Activated B cell treated with CpG ODN at 0.5 μM for 24 hours (primary cell): ENCODE measurements at regions of chr15 and their contacts with region 1.

Region 1: GRCh38 chr15:85330901-85331588 is 49.4 kb upstream of the AKAP13 start:
- DNase-seq: peak; percentile 56
- ATAC-seq: peak; percentile 53
- H3K4me3 Mint-ChIP-seq: peak overlapping the region; percentile 90
- H3K27ac Mint-ChIP-seq: peak overlapping the region; percentile 99
- H3K4me1 Mint-ChIP-seq: peaks cover 74% of the 10 kb centered on the region
- H3K27me3 Mint-ChIP-seq: no peaks in the 10 kb centered on the region
- CTCF ChIP-seq: no peak

Region 2: GRCh38 chr15:85312486-85312885 is 18.6 kb before region 1 on chr15:
- CTCF ChIA-PET with region 1: interaction called, 78 read pairs
- POLR2A ChIA-PET with region 1: interaction called, 409 read pairs
- intact Hi-C with region 1: loop called (anchors 1 kb)
- DNase-seq: peak; percentile 53
- ATAC-seq: peak; percentile 89
- H3K4me3 Mint-ChIP-seq: peak overlapping the region; percentile 87
- H3K27ac Mint-ChIP-seq: peak overlapping the region; percentile 99
- H3K4me1 Mint-ChIP-seq: peaks cover 96% of the 10 kb centered on the region
- H3K27me3 Mint-ChIP-seq: no peaks in the 10 kb centered on the region
- CTCF ChIP-seq: no peak

Region 3: DNA sequence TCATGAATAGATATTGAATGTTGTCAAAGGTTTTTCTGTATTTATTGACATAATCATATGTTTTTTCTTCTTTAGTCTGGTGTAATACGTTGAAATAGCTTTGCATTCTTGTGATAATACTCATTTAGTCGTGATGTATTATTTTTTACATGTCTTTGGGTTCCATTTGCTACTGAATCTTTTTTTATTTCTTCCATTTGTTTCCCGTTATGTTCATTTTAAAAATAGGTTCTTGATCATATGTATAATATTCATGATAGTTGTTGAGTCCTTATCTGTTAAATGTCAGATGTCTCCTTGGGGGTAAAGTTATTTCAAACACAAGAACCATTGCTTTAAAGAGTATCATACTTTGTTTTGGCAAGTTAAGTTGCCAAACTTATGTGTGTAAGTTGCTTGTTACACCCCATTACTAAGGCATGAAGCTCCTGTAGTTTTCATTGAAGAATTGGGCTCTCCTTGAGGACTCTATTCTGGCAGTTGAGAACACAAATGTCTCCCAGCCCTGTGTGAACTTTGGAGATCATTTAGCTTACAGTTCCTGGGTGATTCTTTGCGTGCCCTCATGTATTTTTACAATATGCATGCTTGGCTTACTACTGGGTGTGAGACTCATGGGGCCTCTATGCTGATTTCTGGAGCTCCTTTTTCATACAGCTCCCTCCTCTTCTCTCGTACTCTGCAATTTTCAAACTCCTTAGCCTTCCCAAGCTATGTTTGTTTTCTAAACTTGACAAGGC is 57.7 kb after region 1 on chr15:
- CTCF ChIA-PET with region 1: interaction called, 4 read pairs
- POLR2A ChIA-PET with region 1: interaction called, 179 read pairs
- intact Hi-C with region 1: no loop called
- DNase-seq: no peak
- ATAC-seq: no peak
- H3K4me3 Mint-ChIP-seq: no peak overlapping the region
- H3K27ac Mint-ChIP-seq: peak overlapping the region; percentile 65
- H3K4me1 Mint-ChIP-seq: peaks cover 40% of the 10 kb centered on the region
- H3K27me3 Mint-ChIP-seq: no peaks in the 10 kb centered on the region
- CTCF ChIP-seq: no peak

Region 4: DNA sequence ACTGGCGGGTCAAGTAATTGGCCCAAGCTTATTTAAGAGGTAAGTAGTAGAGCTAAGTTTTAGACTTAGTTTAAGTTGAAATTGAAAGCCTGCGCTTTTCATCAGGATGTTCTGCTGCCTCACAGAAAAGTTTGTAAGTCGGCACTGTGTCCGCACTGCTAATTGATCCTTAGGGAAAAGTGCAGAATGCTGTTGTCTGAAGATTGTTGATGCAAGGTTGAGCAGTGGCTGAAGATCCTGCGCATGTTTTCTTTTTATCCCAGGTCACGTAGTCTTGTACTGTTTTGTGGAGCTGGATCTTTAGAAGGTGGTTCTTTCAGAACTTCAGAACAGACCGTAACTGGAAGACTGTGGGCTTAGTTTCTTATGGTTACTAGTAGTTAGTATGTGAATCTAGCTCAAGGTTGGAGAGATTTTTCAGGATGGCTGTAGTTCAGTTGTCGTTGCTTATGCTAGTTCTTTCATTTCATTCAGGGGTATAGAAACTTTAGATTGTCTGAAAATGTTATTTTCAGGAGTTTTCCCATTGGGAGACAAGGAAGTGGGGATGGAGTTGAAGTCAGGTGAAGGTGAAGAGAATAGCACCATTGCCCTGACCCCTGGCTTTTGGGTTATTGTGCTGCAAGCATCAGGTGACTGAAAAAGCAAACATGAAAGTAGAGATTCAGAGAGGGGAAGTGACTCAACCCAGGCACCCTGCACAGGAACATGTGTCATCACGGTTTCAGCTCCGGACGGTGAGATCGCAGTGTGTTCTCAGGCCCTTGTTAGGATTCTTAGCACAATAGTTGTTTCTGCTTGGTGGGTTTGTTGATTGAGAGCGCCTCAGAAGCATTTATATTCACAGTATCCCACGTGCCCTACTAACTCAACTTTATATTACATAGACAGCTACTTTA is 82.2 kb after region 1 on chr15:
- CTCF ChIA-PET with region 1: interaction called, 150 read pairs
- POLR2A ChIA-PET with region 1: interaction called, 94 read pairs
- intact Hi-C with region 1: loop called (anchors 1 kb)
- DNase-seq: peak; percentile 50
- ATAC-seq: peak; percentile 94
- H3K4me3 Mint-ChIP-seq: peak overlapping the region; percentile 48
- H3K27ac Mint-ChIP-seq: peak overlapping the region; percentile 87
- H3K4me1 Mint-ChIP-seq: peaks cover 73% of the 10 kb centered on the region
- H3K27me3 Mint-ChIP-seq: no peaks in the 10 kb centered on the region
- CTCF ChIP-seq: no peak

Region 5: DNA sequence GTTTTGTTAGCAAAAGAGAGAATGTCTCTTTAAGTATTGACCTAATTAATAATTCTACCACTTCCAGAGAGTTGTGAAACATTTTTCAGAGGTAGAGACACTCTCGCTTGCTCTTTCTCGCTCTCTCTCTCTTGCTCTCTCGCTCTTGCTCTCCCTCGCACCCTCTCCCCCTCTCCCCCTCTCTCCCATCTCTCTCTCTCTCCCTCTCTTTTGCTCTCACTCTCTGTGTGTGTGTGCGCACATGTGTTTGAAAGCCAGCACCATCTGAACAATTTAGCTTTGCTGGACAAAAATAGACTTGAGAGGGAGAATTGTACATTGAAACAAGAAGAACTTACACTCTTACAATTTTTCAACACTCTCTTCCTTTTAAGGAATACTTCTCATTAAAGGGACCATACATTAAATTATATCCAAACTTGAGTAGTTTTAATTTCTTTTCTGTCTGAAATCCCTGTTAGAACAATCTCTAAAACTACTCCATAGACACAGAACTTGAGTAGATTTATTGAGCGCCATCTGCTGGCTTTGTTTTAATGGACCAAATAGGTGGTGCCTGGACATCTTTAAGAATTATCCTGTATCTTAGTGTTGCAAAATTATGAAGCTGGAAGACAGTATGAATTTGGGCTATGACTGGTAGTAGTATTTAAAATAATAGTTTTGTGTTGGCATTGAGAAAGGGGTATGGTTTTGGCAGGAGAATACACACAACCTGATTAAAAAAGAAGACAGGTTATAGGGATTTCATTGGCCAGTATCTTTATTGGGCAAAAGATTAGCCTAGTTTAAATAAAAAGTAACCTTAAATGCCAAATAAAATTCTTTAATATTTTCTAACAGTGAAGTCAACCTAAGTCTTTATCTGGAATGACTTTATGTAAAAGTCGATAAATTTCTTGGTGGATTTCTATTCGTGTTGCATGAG is 174.0 kb after region 1 on chr15:
- CTCF ChIA-PET with region 1: interaction called, 11 read pairs
- POLR2A ChIA-PET with region 1: no interaction called
- intact Hi-C with region 1: loop called (anchors 1 kb)
- DNase-seq: no peak
- ATAC-seq: peak; percentile 56
- H3K4me3 Mint-ChIP-seq: no peak overlapping the region
- H3K27ac Mint-ChIP-seq: no peak overlapping the region
- H3K4me1 Mint-ChIP-seq: peaks cover 49% of the 10 kb centered on the region
- H3K27me3 Mint-ChIP-seq: no peaks in the 10 kb centered on the region
- CTCF ChIP-seq: peak; percentile 60